ENCODE measurements at regions of chr11 and their contacts with region 1.

Region 1: DNA sequence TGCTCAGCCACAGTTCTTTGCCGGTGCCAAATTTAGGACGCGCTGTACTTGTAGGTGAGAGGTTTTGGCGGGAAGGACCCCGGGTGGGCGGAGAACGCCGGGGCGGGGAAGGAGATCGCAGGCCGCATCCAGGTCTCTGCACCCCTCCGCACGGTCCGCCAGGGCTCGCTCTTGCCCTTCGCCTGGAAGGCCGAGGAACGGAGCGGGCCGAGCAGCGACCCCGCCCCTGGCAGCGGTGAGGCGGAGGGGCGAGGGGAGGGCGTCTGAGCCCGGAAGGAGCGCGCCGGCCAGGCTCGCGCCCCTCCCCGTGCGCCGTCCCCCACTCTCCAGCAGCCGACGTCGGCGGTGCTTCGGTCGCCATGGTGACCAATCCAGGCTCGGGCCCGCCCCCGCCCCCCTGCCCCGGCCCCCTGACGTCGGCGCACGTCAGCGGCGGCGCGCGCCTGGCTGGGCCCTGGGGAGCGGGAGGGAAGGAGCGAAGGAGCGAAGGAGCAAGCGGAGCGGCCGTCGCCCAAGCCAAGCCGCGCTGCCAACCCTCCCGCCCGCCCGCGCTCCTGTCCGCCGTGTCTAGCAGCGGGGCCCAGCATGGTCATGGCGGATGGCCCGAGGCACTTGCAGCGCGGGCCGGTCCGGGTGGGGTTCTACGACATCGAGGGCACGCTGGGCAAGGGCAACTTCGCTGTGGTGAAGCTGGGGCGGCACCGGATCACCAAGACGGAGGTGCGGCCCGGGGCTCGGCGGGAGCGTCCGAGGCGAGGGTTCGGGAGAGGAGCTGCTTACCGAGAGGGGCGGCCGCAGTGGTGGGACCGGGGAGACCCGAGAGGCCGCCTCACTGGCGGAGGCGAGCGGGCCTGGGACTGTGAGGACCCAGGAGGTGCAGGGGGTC is at the start of gene SIK2:
- DNase-seq: peak; percentile 98
- H3K4me3 ChIP-seq: peak within 1 kb of the TSS; percentile 82 to 95
- H3K27ac ChIP-seq: peak within 1 kb of the TSS; percentile 74 to 90
- H3K4me1 ChIP-seq: peaks cover 12 to 13% of the 10 kb centered on the region in 2 experiments; a peak in 3 of 4 replicates
- H3K27me3 ChIP-seq: no peaks in the 10 kb centered on the region
- CTCF ChIP-seq: peak; percentile 79
- EP300 ChIP-seq: peak; percentile 17 to 41; a peak in 3 of 4 replicates
- RAD21 ChIP-seq: peak; percentile 98
- polyA plus RNA-seq, gene SIK2: 8.9 and 9.7 TPM in 2 replicates

Region 2: DNA sequence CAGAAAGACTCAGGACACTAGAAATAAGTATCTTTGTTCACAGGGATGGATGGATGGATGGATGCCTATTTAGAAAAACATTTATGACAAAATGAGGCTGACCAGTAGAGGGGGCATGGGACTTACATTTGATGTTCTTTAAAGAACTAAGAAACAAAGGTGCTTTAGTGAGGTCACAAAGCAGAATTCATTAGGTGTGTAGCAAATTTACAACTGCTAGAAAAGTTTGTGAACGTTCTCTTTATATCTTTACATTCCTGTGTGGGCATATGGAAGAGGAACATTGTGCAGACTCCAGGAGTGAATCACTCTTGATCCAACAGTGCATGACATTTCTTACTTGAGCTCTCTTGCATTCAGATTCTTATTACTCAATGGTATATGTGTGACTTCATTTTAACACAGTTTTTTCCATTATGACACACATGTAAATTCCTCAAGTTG is 15.8 kb before region 1 on chr11:
- CTCF ChIA-PET with region 1: interaction called, 13 read pairs
- POLR2A ChIA-PET with region 1: no interaction called
- DNase-seq: peak; percentile 27
- H3K4me3 ChIP-seq: no peak overlapping the region
- H3K27ac ChIP-seq: no peak overlapping the region
- H3K4me1 ChIP-seq: peaks cover 5 to 14% of the 10 kb centered on the region in 2 experiments; a peak in 3 of 4 replicates
- H3K27me3 ChIP-seq: no peaks in the 10 kb centered on the region
- CTCF ChIP-seq: peak; percentile 74
- EP300 ChIP-seq: no peak
- RAD21 ChIP-seq: peak; percentile 78

Region 3: DNA sequence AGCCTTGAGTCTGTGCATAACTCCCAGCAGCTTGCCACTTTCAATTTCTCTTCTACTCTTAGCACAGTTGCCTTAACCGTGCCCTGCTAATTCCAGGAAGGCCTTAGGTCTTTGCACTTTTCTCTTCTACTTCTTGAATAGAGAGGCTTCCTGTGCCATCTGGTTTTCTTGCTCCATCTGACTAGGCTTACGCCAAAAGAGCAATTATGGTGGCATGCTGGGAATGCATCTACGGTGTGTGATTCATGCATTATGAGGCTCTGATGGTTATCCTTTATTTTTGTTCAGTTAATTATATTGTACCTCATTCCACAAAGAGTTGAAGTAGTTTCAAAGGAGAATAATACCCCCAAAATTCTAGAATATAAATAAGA is 29.4 kb after region 1 on chr11:
- CTCF ChIA-PET with region 1: interaction called, 20 read pairs
- POLR2A ChIA-PET with region 1: no interaction called
- DNase-seq: no peak
- H3K4me3 ChIP-seq: no peak overlapping the region
- H3K27ac ChIP-seq: peak overlapping the region; percentile 71 to 76; a peak in 3 of 4 replicates
- H3K4me1 ChIP-seq: peaks cover 44 to 62% of the 10 kb centered on the region in 2 experiments; a peak in 3 of 4 replicates
- H3K27me3 ChIP-seq: no peaks in the 10 kb centered on the region
- CTCF ChIP-seq: no peak
- EP300 ChIP-seq: peak in 1 of 2 experiments; percentile 82; a peak in 1 of 4 replicates
- RAD21 ChIP-seq: no peak

Region 4: GRCh38 chr11:111761036-111761435 is 158.8 kb after region 1 on chr11:
- CTCF ChIA-PET with region 1: interaction called, 18 read pairs
- POLR2A ChIA-PET with region 1: no interaction called
- DNase-seq: no peak
- H3K4me3 ChIP-seq: no peak overlapping the region
- H3K27ac ChIP-seq: no peak overlapping the region
- H3K4me1 ChIP-seq: peaks cover 0 to 5% of the 10 kb centered on the region in 2 experiments; a peak in 2 of 4 replicates
- H3K27me3 ChIP-seq: no peaks in the 10 kb centered on the region
- CTCF ChIP-seq: no peak
- EP300 ChIP-seq: no peak
- RAD21 ChIP-seq: no peak

Region 5: DNA sequence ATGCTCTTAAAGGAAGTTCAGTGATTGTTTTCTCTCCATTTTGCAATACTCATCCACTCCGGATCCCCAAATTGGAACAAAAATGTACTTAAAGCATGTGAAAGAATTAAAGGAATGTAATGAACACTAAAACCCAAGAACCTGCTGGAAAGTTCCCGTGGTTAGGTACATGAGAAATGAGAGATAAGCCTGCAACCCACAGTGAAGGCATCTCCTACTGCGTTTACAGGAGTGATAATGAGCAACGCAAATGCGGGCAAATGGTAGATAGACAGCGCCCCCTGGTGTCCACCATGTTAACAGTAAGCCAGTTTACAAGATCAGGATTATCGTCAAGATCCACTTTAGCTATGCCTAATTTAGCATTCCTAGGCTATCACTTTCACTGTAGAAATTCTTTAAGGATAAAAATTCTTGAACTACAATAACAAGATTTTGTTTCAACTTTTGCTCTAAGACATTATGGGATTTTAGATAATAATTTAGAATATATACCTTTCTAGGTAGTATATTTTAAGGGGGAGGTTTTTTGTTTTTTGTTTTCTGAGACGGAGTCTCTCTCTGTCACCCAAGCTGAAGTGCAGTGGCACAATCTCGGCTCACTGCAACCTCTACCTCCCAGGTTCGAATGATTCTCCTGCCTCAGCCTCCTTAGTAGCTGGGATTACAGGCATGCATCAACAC is 239.3 kb after region 1 on chr11:
- CTCF ChIA-PET with region 1: interaction called, 39 read pairs
- POLR2A ChIA-PET with region 1: no interaction called
- DNase-seq: peak; percentile 73
- H3K4me3 ChIP-seq: no peak overlapping the region
- H3K27ac ChIP-seq: peak overlapping the region; percentile 28 to 43; a peak in 2 of 4 replicates
- H3K4me1 ChIP-seq: peaks cover 3 to 7% of the 10 kb centered on the region in 2 experiments
- H3K27me3 ChIP-seq: no peaks in the 10 kb centered on the region
- CTCF ChIP-seq: peak; percentile 95
- EP300 ChIP-seq: no peak
- RAD21 ChIP-seq: peak; percentile 96

Measured in SK-N-SH (cell line).